Psoas muscle (tissue), 8 donors: ENCODE measurements at regions of chr4 and their contacts with region 1.

Region 1: DNA sequence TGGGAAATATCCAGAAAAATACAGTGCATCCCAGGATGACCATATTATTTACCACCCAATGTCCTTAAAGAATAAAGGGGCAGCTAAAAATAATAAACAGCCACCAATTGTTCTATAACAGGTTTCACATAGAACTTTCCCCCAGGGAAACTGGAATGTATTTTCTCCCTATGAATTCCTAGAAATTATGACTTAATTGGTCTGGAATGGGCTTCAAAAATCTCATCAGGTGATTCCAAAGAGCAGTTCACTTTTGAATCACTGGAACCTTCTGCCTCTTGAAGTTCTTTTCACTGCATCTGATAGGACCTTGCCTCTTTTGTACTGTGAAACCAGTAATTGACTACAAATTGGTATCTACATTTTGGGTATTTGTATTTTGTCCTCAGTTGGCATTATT is 119.3 kb downstream of the ZNF330 start:
- DNase-seq: no peak
- ATAC-seq: no peak
- H3K4me3 ChIP-seq: no peak overlapping the region
- H3K27ac ChIP-seq: no peak overlapping the region
- H3K4me1 ChIP-seq: no peaks in the 10 kb centered on the region
- H3K27me3 ChIP-seq: no peaks in the 10 kb centered on the region
- CTCF ChIP-seq: no peak

Region 2: DNA sequence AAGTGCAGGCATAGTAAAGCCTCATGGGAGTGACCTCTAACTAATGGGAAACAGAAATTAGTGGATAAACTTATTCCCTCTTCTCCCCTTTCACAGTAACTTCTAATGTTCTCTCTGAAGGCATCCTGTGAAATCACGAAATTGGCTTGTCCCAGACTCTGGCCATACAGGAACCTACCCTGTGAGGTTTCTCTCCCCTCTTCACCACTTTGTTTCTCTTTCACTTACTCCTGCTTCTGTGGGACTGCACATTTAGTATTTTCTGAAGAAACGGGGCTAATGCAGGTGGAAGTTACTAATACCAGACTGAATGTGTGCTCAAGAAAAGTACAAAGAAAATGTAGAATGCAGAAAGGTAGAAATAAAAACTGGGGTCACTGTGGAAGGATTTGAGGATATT is 99.3 kb before region 1 on chr4:
- intact Hi-C with region 1: no loop called
- DNase-seq: no peak
- ATAC-seq: no peak
- H3K4me3 ChIP-seq: no peak overlapping the region
- H3K27ac ChIP-seq: no peak overlapping the region
- H3K4me1 ChIP-seq: no peaks in the 10 kb centered on the region
- H3K27me3 ChIP-seq: no peaks in the 10 kb centered on the region
- CTCF ChIP-seq: no peak

Region 3: GRCh38 chr4:141636082-141636770 is 296.3 kb after region 1 on chr4 and contains the start of gene IL15:
- intact Hi-C with region 1: loop called in 1 of 2 experiments (anchors 5 kb)
- DNase-seq: peak; percentile 71 to 84
- ATAC-seq: peak; percentile 88 to 93 (median 92)
- H3K4me3 ChIP-seq: peak within 1 kb of the TSS; percentile 76
- H3K27ac ChIP-seq: peak within 1 kb of the TSS; percentile 82
- H3K4me1 ChIP-seq: peaks cover 8% of the 10 kb centered on the region
- H3K27me3 ChIP-seq: no peaks in the 10 kb centered on the region
- CTCF ChIP-seq: no peak
- total RNA-seq, gene IL15: 1.4 to 2.4 (median 2.2) TPM